Ascending aorta (tissue), 2 donors: ENCODE measurements at regions of chr12 and their contacts with region 1.

Region 1: DNA sequence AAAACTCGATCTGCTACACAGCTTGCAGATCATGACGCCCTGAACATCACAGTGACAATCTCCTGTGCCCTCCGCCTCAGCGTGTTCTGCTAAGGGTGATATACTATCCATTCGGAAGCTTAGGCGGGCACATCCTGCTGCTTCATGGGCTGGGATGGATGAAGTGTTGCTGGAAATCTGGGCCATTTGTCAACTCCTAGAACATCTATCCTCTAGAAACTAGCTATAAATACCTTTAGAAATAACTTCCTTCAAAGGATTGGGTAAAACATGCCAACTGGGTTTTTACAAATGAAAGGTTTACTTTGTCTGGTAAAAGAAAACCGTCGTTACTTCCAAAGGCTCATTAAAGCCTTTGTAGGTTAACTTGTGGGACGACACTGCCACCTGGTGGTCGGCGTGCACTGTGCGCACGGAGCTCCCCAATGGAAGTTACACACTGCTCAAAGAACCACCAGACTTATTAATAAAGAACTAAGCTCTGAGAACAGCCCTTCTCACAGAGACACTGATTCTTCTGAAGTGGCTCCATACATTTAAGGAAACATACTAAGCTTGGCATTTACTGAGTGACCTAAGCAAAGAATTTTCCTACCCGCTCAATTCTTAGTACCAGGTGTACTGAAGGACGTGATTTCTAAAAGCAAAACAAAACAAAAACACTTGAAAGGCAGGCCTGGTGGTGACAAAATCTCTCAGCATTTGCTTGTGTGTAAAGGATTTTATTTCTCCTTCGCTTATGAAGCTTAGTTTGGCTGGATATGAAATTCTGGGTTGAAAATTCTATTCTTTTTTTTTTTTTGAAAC is 21.6 kb upstream of the CACNA2D4 start:
- DNase-seq: peak in 1 of 2 donors; percentile 92
- H3K4me3 ChIP-seq: peak overlapping the region in 1 of 2 donors; percentile 7
- H3K27ac ChIP-seq: peak overlapping the region; percentile 2 to 39
- H3K4me1 ChIP-seq: peaks cover 6 to 19% of the 10 kb centered on the region in 2 donors
- H3K27me3 ChIP-seq: no peaks in the 10 kb centered on the region
- CTCF ChIP-seq: peak; percentile 90 to 93 (median 92)

Region 2: DNA sequence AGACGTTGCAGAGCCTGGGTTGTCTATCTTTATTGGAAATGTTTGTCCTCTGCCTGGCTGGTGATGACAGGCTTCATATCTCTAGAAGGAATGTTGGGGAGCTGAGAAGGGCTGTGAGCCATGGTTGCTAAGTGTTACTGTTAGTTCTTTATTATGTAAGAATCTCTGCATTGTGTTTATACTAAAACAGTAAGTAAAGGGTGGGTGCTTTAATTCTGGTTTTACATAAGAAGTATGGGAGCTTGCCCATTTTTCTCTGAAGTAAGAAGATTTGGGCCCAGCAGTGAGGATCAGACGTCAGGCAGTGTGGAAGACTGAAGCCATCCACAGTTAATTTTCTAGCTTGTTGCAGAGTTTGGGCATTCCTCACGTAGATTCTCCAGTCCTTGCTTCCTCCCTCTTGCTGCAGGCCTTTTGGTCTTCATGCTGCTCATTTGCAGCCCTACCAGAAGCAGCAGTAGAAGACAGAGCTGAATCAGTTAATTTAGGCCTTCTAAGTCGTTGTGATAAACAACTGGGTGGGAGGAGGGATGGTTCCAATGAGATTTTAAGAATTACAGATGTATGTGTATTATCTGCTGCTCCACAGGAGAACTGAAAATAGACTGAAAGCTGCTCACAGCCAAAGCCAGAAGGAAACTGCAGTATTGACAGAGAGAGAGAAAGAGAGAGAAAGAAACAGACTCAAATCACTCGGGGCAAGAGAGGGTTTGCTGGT is 289.6 kb before region 1 on chr12:
- intact Hi-C with region 1: loop called (anchors 5 kb)
- DNase-seq: no peak
- H3K4me3 ChIP-seq: no peak overlapping the region
- H3K27ac ChIP-seq: peak overlapping the region in 1 of 2 donors; percentile 47
- H3K4me1 ChIP-seq: peaks cover 0 to 12% of the 10 kb centered on the region in 2 donors
- H3K27me3 ChIP-seq: no peaks in the 10 kb centered on the region
- CTCF ChIP-seq: no peak

Region 3: DNA sequence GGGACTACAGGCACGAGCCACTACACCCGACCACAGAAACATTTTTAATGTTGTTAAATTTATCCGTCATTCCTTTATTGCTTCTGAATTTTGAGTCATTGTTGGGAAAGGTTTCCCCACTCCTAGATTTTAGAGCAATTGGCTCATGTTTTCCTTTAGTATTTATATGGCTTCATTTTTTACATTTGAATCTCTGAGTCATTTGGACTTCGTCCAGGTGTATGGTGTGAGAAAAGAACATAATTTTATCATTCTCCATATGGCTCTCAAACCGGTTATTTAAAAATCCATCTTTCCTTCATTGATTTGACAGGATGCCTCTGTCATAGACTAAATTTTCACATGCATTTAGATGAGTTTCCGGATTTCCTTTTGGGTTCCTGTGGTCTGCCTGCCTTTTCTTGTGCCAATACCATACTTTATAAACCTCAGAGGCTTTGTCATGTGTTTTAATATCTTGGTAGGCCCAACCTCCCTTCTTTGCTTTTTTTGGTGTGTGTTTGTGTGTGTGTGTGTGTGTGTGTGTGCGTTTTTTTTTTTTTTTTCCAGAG is 88.8 kb before region 1 on chr12:
- intact Hi-C with region 1: loop called (anchors 5 kb)
- DNase-seq: peak in 1 of 2 donors; percentile 15
- H3K4me3 ChIP-seq: no peak overlapping the region
- H3K27ac ChIP-seq: peak overlapping the region in 1 of 2 donors; percentile 21
- H3K4me1 ChIP-seq: peaks cover 0 to 2% of the 10 kb centered on the region in 2 donors
- H3K27me3 ChIP-seq: no peaks in the 10 kb centered on the region
- CTCF ChIP-seq: no peak

Region 4: DNA sequence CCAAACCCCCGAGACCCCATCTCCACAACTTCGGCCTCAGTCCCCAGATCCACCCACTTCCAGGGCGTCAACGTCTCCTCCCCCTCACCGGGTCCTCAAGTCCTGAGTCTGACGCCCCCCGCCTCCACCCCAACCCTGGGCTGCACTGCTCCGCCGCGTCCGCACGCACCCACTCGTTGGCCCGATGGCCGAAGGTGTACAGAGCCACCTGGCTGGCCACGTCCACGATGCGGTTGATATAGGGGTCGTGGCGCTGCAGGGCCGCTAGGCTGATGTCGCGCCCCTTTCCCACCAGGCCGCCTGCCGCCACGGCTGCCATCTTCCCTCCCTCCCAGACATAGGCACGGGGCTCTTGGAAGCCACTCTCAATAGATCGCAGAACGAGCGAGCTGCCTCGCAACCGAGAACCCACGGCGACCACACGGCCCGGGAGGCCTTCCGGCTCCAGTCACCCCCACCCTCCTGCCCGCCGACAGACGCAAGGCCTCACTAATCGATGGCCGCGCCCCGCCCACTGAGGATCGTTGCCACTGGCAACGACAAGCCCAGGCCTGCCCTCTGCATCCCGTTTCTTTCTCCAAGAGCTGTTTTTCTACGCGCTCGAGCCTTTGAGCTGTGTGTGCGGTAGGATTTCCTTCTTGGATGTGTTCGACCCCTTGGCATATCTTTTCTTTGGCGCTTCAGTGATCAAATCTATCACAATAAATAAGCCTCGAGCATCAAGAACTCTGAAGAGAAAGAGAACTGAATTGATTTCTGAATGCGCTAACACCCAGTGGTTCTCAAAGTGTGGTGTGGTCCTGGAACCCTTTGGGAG is 64.3 kb after region 1 on chr12 and contains the start of gene DCP1B:
- intact Hi-C with region 1: loop called (anchors 2 kb)
- DNase-seq: peak; percentile 90 to 98
- H3K4me3 ChIP-seq: peak within 1 kb of the TSS; percentile 87 to 97
- H3K27ac ChIP-seq: peak within 1 kb of the TSS; percentile 89 to 95
- H3K4me1 ChIP-seq: peaks cover 7 to 15% of the 10 kb centered on the region in 2 donors
- H3K27me3 ChIP-seq: no peaks in the 10 kb centered on the region
- CTCF ChIP-seq: peak in 1 of 3 experiments; percentile 2
- total RNA-seq, gene DCP1B: 23.3 TPM